Activated CD4-positive, alpha-beta T cell treated with anti-CD3 and anti-CD28 coated beads, Interleukin-2, amount 10 ng/mL, durations not matched to agents 7 days and 5 days (primary cell): ENCODE measurements at regions of chr20 and their contacts with region 1.

Region 1: DNA sequence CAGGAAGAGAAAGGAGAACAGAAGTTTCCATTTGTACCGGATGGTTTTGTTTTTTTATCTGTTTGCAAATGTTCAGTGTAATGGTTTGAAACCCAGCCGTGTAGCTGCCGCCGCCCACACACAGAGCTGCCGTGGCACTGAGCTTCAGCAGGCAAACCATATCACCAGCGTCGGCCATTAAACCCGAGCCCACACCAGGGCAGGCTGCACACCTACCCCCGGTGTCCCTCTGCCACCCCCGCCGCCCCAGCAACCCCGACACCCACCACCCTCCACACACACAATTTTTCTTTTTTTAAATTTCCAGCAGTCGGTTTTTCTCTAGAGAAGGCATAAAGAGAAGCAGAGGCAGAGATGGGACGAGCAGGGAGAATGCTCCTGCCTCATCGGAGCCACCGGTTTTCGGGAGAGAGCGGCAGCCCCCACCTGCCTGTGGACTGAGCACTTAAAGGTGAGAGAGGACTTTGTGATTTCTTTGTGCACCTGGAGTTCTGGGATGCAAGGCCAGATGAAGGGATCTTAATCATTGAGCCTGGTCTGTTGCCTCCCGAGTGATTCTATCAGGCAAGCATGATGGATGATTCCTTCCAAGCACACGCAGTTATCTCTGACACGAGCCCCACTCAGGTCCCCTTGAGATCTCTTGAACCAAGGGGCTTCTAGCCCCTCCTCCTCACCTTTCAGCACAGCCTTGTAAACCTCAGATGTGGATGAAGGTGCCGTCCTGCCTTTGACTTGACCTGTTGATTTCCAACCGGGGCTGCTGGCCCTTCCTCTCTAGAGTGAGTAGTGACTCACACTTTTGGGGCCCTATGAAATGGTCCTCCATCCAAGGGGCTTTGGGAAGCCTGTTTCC is 17.5 kb upstream of the ZNF831 start:
- DNase-seq: peak; percentile 48
- H3K4me3 Mint-ChIP-seq: peak overlapping the region; percentile 64
- H3K27ac Mint-ChIP-seq: peak overlapping the region; percentile 92
- H3K4me1 Mint-ChIP-seq: peaks cover 69% of the 10 kb centered on the region
- H3K27me3 Mint-ChIP-seq: no peaks in the 10 kb centered on the region

Region 2: GRCh38 chr20:59032023-59032712 is 114.0 kb before region 1 on chr20 and contains the start of gene ATP5F1E:
- CTCF ChIA-PET with region 1: no interaction called
- POLR2A ChIA-PET with region 1: no interaction called
- DNase-seq: peak; percentile 95
- H3K4me3 Mint-ChIP-seq: peak within 1 kb of the TSS; percentile 91
- H3K27ac Mint-ChIP-seq: peak within 1 kb of the TSS; percentile 91
- H3K4me1 Mint-ChIP-seq: peaks cover 71% of the 10 kb centered on the region
- H3K27me3 Mint-ChIP-seq: no peaks in the 10 kb centered on the region
- total RNA-seq, gene ATP5F1E: 98.1 to 101 TPM

Region 3: GRCh38 chr20:59104831-59105230 is 41.3 kb before region 1 on chr20:
- CTCF ChIA-PET with region 1: no interaction called
- POLR2A ChIA-PET with region 1: no interaction called
- DNase-seq: no peak
- H3K4me3 Mint-ChIP-seq: no peak overlapping the region
- H3K27ac Mint-ChIP-seq: no peak overlapping the region
- H3K4me1 Mint-ChIP-seq: peaks cover 12% of the 10 kb centered on the region
- H3K27me3 Mint-ChIP-seq: peaks cover 8% of the 10 kb centered on the region

Region 4: DNA sequence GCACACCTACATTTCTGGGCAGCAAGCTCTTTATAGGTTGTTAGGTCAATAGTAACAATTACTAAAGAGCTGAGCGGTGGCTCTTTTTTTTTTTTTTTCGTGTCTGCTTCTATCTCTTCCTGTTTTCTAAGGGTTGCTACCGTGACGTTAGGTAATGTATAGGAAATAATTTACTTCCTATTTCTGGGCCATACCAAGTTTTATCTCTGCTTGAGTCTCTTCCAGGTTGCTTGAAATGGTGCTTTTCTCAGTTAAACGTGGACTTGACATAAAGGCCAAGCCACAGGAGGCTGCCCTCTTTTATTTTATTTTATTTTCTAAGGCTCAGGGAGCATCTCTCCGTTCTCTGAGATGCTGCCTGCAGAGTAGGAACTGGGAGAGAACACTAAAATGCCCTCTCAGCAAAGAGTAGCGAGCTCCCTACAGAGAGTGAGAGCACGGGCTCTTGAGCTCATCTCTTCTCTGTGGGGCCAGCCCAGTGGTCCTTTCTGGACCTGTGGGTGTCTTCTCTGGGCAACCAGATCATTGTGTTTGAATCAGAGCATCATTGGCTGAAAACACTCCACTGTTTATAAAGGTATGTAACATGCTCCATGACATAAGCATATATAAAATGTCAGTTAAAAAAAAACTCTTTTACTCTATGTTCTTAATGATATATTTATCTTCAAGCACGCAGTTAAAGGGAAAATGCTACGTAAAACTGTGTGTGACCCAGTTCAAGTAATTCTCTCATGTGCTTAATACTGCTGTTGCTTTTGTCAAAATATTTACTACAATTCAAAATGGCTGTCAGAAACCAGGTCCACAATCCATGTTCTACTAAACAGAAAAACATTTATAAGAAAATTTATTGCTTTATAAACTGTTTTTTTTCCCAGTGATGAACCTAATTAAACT is 17.7 kb after region 1 on chr20 and contains the start of gene ZNF831:
- CTCF ChIA-PET with region 1: interaction called, 11 read pairs
- POLR2A ChIA-PET with region 1: interaction called, 4 read pairs
- DNase-seq: peak; percentile 57
- H3K4me3 Mint-ChIP-seq: peak within 1 kb of the TSS; percentile 82
- H3K27ac Mint-ChIP-seq: peak within 1 kb of the TSS; percentile 93
- H3K4me1 Mint-ChIP-seq: peaks cover 89% of the 10 kb centered on the region
- H3K27me3 Mint-ChIP-seq: no peaks in the 10 kb centered on the region
- total RNA-seq, gene ZNF831: 10.3 to 10.4 TPM

Region 5: DNA sequence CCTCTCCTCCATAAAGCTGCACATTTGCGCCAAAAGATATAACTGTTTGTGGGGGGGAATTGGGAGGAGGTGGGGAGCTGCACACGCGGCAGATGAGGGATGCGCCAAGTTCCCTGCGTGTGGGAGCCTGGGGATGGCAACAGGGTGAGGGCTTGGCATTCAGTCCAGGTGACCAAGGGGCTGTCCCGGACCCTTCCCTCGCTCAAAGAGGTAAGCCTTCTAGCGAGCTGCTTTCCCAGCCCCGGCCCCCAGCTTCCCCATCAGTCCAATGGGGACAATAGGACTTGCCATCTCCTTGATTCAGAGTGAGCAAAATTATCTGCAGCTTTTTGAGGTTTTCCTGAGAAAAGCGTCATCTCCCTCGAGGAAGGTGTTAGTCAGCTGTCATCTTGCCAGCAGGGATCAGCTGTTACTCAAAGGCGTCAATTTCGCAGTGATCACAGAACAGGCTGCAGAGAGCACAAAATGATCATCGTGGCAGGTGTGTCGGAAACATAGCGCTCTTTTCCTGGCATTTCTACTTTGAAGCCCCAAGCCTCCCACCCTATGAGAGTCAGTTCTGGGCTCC is 38.8 kb after region 1 on chr20:
- CTCF ChIA-PET with region 1: no interaction called
- POLR2A ChIA-PET with region 1: no interaction called
- DNase-seq: no peak
- H3K4me3 Mint-ChIP-seq: no peak overlapping the region
- H3K27ac Mint-ChIP-seq: no peak overlapping the region
- H3K4me1 Mint-ChIP-seq: peaks cover 27% of the 10 kb centered on the region
- H3K27me3 Mint-ChIP-seq: no peaks in the 10 kb centered on the region